ENCODE measurements at regions of chr15 and their contacts with region 1.

Region 1: GRCh38 chr15:99928429-99928981 is 195.3 kb upstream of the LYSMD4 start:
- DNase-seq: peak; percentile 92
- ATAC-seq: peak; percentile 91
- H3K4me3 ChIP-seq: peak overlapping the region; percentile 44 to 72 (median 60)
- H3K4me3 Mint-ChIP-seq: peak overlapping the region; percentile 89
- H3K27ac ChIP-seq: peak overlapping the region; percentile 72 to 75
- H3K27ac Mint-ChIP-seq: peak overlapping the region; percentile 91
- H3K4me1 ChIP-seq: peaks cover 11 to 16% of the 10 kb centered on the region in 2 donors
- H3K4me1 Mint-ChIP-seq: peaks cover 10% of the 10 kb centered on the region
- H3K27me3 ChIP-seq: peaks cover 0 to 2% (median 0%) of the 10 kb centered on the region in 4 experiments
- H3K27me3 Mint-ChIP-seq: peaks cover 5% of the 10 kb centered on the region
- CTCF ChIP-seq: peak; percentile 61

Region 2: DNA sequence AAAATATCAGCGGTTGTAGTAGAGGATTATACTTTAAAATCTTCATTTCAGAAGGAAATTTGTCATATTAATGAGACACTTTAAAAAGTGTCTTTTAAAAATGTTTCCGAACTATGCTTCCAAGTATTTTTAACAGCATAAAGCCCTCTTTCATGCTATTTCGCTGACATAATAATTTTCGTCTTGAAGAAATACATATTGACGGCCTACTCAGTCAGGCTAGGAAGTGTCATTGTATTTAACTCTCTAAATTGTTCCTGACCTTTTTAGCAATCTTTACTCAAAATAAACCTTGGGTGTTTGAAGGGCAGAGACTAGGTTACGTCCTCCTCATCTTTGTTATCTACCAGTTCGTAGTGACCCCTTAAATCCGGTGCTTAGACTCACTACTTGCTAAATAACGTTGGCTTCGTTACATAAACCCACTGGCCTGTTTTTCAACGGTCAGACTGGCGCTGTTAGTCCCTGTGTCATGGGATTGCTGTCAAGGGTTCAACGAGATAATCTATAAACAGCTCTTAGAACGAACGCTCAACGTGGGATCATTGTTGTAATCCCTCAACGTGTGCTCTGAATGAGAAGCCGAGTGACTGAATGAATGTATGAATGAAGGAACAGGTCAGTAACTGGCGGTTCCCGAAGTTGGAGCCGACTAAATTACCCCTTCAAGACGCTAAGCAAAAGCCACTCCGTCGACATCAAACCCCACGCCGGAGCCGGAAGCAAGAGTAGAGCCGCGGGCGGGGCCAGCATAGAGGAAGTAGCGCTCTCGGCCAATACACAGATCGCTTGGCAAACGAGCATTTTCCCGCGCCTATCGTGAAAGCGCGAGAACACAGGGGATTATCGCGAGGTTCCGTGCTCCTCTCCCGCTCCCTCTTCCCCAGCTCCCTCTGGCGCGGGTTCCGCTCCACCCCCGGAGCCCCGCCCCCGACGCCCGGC is 677.7 kb before region 1 on chr15:
- CTCF ChIA-PET with region 1: no interaction called
- POLR2A ChIA-PET with region 1: no interaction called
- intact Hi-C with region 1: loop called (anchors 2 kb)
- DNase-seq: peak; percentile 97
- ATAC-seq: peak; percentile 97
- H3K4me3 ChIP-seq: peak overlapping the region; percentile 61 to 91 (median 81)
- H3K4me3 Mint-ChIP-seq: peak overlapping the region; percentile 96
- H3K27ac ChIP-seq: peak overlapping the region; percentile 70 to 81
- H3K27ac Mint-ChIP-seq: peak overlapping the region; percentile 92
- H3K4me1 ChIP-seq: peaks cover 18 to 30% of the 10 kb centered on the region in 2 donors
- H3K4me1 Mint-ChIP-seq: peaks cover 31% of the 10 kb centered on the region
- H3K27me3 ChIP-seq: no peaks in the 10 kb centered on the region
- H3K27me3 Mint-ChIP-seq: no peaks in the 10 kb centered on the region
- CTCF ChIP-seq: no peak

Region 3: GRCh38 chr15:100572362-100572983 is 644.0 kb after region 1 on chr15:
- CTCF ChIA-PET with region 1: interaction called, 25 read pairs
- POLR2A ChIA-PET with region 1: no interaction called
- intact Hi-C with region 1: loop called (anchors 2 kb)
- DNase-seq: peak; percentile 39
- ATAC-seq: no peak
- H3K4me3 ChIP-seq: no peak overlapping the region
- H3K4me3 Mint-ChIP-seq: no peak overlapping the region
- H3K27ac ChIP-seq: no peak overlapping the region
- H3K27ac Mint-ChIP-seq: no peak overlapping the region
- H3K4me1 ChIP-seq: no peaks in the 10 kb centered on the region
- H3K4me1 Mint-ChIP-seq: peaks cover 4% of the 10 kb centered on the region
- H3K27me3 ChIP-seq: no peaks in the 10 kb centered on the region
- H3K27me3 Mint-ChIP-seq: no peaks in the 10 kb centered on the region
- CTCF ChIP-seq: peak; percentile 75